Pancreas (tissue), 10 donors: ENCODE measurements at regions of chr7 and their contacts with region 1.

Region 1: GRCh38 chr7:30276203-30276900 is 8.0 kb upstream of the ZNRF2 start:
- DNase-seq: peak in 1 of 6 donors; percentile 40
- ATAC-seq: peak; percentile 53 to 84 (median 83)
- H3K4me3 ChIP-seq: no peak overlapping the region
- H3K27ac ChIP-seq: no peak overlapping the region
- H3K4me1 ChIP-seq: peaks cover 0 to 4% (median 0%) of the 10 kb centered on the region in 3 donors
- H3K27me3 ChIP-seq: no peaks in the 10 kb centered on the region
- CTCF ChIP-seq: peak in 3 of 4 donors; percentile 21 to 40 (median 29)

Region 2: DNA sequence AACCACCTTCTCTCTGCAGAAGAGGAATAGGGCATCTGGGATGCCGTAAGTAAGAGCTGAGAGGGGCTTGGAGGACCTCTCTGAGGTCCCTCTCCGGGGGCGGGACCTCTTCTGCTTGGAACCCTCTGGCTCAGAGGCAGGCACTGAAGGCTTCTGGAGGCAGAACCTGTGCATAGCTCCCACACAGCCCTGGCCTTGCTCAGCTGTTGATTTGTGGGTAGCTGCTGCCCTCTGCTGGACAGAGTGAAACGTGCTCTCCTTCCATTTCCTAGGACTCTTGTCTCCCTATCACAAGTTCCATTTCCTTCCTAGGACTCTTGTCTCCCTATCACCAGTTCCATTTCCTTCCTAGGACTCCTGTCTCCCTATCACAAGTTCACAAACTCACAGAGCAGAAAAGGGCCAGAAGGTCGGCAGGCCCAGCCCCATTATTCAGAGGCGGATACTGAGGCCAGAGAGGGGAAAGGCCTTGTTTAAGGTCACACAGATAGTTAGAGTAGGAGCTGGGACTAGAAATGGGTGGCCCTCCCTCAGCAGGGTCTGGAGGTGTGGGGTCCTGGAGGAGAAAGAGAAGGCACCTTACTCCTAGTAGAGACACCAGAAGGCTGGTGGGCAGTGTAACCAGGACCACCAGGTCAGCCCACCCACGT is 288.0 kb after region 1 on chr7:
- intact Hi-C with region 1: loop called in 2 of 3 experiments (anchors 5 kb)
- DNase-seq: peak; percentile 67 to 90 (median 83)
- ATAC-seq: peak; percentile 95 to 99 (median 98)
- H3K4me3 ChIP-seq: no peak overlapping the region
- H3K27ac ChIP-seq: no peak overlapping the region
- H3K4me1 ChIP-seq: no peaks in the 10 kb centered on the region
- H3K27me3 ChIP-seq: no peaks in the 10 kb centered on the region
- CTCF ChIP-seq: peak; percentile 57 to 80 (median 66)